ENCODE measurements at regions of chr2 and their contacts with region 1.

Region 1: GRCh38 chr2:178414266-178415247 is 36.4 kb downstream of the PRKRA start:
- DNase-seq: peak; percentile 91
- H3K4me3 Mint-ChIP-seq: peak overlapping the region; percentile 97
- H3K27ac Mint-ChIP-seq: no peak overlapping the region
- H3K4me1 Mint-ChIP-seq: no peaks in the 10 kb centered on the region
- H3K27me3 Mint-ChIP-seq: no peaks in the 10 kb centered on the region
- CTCF ChIP-seq: peak; percentile 89

Region 2: GRCh38 chr2:177983183-177983788 is 431.3 kb before region 1 on chr2:
- CTCF ChIA-PET with region 1: no interaction called
- intact Hi-C with region 1: loop called (anchors 10 kb)
- DNase-seq: peak; percentile 43
- H3K4me3 Mint-ChIP-seq: no peak overlapping the region
- H3K27ac Mint-ChIP-seq: no peak overlapping the region
- H3K4me1 Mint-ChIP-seq: no peaks in the 10 kb centered on the region
- H3K27me3 Mint-ChIP-seq: no peaks in the 10 kb centered on the region
- CTCF ChIP-seq: peak; percentile 70

Region 3: GRCh38 chr2:178072383-178073301 is 341.9 kb before region 1 on chr2 and contains the start of gene PDE11A:
- CTCF ChIA-PET with region 1: no interaction called
- intact Hi-C with region 1: no loop called
- DNase-seq: peak; percentile 90
- H3K4me3 Mint-ChIP-seq: peak within 1 kb of the TSS; percentile 83
- H3K27ac Mint-ChIP-seq: peak within 1 kb of the TSS; percentile 45
- H3K4me1 Mint-ChIP-seq: peaks cover 48% of the 10 kb centered on the region
- H3K27me3 Mint-ChIP-seq: no peaks in the 10 kb centered on the region
- CTCF ChIP-seq: no peak
- total RNA-seq, gene PDE11A: 1.4 and 2.1 TPM in 2 replicates

Region 4: GRCh38 chr2:178101321-178102079 is 313.1 kb before region 1 on chr2:
- CTCF ChIA-PET with region 1: no interaction called
- intact Hi-C with region 1: no loop called
- DNase-seq: no peak
- H3K4me3 Mint-ChIP-seq: no peak overlapping the region
- H3K27ac Mint-ChIP-seq: no peak overlapping the region
- H3K4me1 Mint-ChIP-seq: no peaks in the 10 kb centered on the region
- H3K27me3 Mint-ChIP-seq: no peaks in the 10 kb centered on the region
- CTCF ChIP-seq: no peak

Region 5: DNA sequence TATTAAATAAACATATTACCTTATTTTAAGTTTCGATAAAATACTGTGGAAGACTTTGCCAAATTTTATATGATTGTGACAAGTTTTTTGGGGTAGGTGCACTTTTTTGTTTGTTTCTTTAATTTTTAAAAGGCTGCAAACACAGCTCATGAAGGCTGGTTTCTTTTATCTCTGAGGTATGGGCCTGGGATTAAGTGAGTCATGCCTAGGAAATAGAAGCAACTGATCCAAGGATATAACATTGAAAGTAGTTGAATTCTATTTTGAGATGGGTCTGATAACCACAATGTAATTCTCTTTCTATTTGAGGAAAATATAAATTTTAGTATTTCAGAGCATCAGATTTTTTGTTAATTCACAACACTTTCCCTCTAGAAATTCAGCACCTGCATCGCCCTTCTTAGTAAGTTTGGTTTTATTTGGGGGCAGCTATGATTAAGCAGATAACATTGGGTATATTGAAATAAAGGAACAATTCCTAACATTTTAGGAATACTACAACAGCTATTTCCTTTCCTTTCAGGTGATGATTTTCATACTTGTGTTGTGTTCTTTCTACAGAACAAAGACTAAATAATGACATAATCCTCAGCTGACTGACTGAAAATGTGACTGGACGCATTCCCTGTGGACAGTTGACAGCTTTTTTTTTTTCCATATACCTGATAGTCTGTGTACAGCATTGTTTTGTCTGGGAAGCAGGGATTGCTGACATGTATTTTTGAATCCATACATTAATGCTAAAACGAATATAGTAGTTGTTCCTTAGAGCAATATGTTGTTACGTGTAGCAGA is 285.5 kb before region 1 on chr2:
- CTCF ChIA-PET with region 1: interaction called, 5 read pairs
- intact Hi-C with region 1: loop called (anchors 1 kb)
- DNase-seq: no peak
- H3K4me3 Mint-ChIP-seq: no peak overlapping the region
- H3K27ac Mint-ChIP-seq: no peak overlapping the region
- H3K4me1 Mint-ChIP-seq: peaks cover 8% of the 10 kb centered on the region
- H3K27me3 Mint-ChIP-seq: no peaks in the 10 kb centered on the region
- CTCF ChIP-seq: no peak

Region 6: GRCh38 chr2:178251151-178251955 is 163.2 kb before region 1 on chr2:
- CTCF ChIA-PET with region 1: no interaction called
- intact Hi-C with region 1: no loop called
- DNase-seq: no peak
- H3K4me3 Mint-ChIP-seq: no peak overlapping the region
- H3K27ac Mint-ChIP-seq: no peak overlapping the region
- H3K4me1 Mint-ChIP-seq: no peaks in the 10 kb centered on the region
- H3K27me3 Mint-ChIP-seq: no peaks in the 10 kb centered on the region
- CTCF ChIP-seq: no peak

Region 7: DNA sequence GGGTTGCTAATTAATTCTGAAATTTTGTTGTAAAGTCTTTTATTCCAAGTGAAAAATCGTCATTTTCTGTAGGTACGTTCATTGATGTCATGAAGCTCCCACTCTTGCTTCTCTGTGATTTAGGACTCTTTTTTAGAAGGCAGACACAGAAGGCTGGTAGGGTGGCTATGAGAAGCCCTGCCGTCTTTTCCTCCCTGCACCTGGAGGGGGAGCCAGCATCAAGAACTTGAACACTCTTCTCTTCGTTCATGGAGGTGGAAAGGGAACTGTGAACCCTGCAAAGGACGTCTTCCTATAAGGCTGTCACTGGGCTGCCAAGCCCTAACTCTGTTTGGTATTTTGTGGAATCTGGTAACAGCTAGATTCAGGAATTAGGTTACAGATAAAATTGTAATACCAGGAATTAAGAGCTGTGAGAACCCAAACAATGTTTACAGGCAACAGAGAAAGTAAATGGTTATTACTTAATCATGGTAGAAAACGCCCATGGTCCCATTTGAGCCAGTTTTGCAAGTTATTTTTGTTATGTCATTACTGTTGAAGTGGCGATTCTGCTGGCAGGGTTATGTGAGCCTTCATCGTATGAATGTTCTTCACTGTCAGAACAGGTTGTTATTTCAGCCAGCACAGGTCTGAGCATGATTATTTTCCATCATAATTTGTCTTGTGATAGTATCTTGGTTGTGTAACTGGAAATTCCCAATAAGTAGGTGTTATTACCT is 108.0 kb before region 1 on chr2:
- CTCF ChIA-PET with region 1: interaction called, 4 read pairs
- intact Hi-C with region 1: loop called (anchors 1 kb)
- DNase-seq: peak; percentile 67
- H3K4me3 Mint-ChIP-seq: no peak overlapping the region
- H3K27ac Mint-ChIP-seq: no peak overlapping the region
- H3K4me1 Mint-ChIP-seq: no peaks in the 10 kb centered on the region
- H3K27me3 Mint-ChIP-seq: no peaks in the 10 kb centered on the region
- CTCF ChIP-seq: peak; percentile 46

Region 8: GRCh38 chr2:178450774-178451525 is 36.4 kb after region 1 on chr2 and contains the starts of genes PJVK and PRKRA:
- CTCF ChIA-PET with region 1: interaction called, 10 read pairs
- intact Hi-C with region 1: no loop called
- DNase-seq: peak; percentile 99
- H3K4me3 Mint-ChIP-seq: peak within 1 kb of the TSS; percentile 90
- H3K27ac Mint-ChIP-seq: peak within 1 kb of the TSS; percentile 99
- H3K4me1 Mint-ChIP-seq: peaks cover 21% of the 10 kb centered on the region
- H3K27me3 Mint-ChIP-seq: no peaks in the 10 kb centered on the region
- CTCF ChIP-seq: no peak
- total RNA-seq, gene PJVK: 2.6 and 4.3 TPM in 2 replicates
- total RNA-seq, gene PRKRA: 50.0 and 53.2 TPM in 2 replicates

Region 9: GRCh38 chr2:178574777-178575176 is 160.2 kb after region 1 on chr2:
- CTCF ChIA-PET with region 1: no interaction called
- intact Hi-C with region 1: no loop called
- DNase-seq: no peak
- H3K4me3 Mint-ChIP-seq: no peak overlapping the region
- H3K27ac Mint-ChIP-seq: no peak overlapping the region
- H3K4me1 Mint-ChIP-seq: no peaks in the 10 kb centered on the region
- H3K27me3 Mint-ChIP-seq: no peaks in the 10 kb centered on the region
- CTCF ChIP-seq: no peak

Measured in Calu3 (cell line).